ENCODE measurements at regions of chr2 and their contacts with region 1.

Region 1: GRCh38 chr2:74147727-74148456 is at the start of gene BOLA3:
- DNase-seq: peak; percentile 92
- H3K4me3 Mint-ChIP-seq: no peak within 1 kb of the TSS
- H3K27ac Mint-ChIP-seq: no peak within 1 kb of the TSS
- H3K4me1 Mint-ChIP-seq: peaks cover 4% of the 10 kb centered on the region
- H3K27me3 Mint-ChIP-seq: no peaks in the 10 kb centered on the region
- total RNA-seq, gene BOLA3: 97.2 to 99.8 TPM

Region 2: GRCh38 chr2:73759285-73759764 is 388.6 kb before region 1 on chr2:
- CTCF ChIA-PET with region 1: no interaction called
- POLR2A ChIA-PET with region 1: no interaction called
- intact Hi-C with region 1: loop called (anchors 10 kb)
- DNase-seq: no peak
- H3K4me3 Mint-ChIP-seq: no peak overlapping the region
- H3K27ac Mint-ChIP-seq: no peak overlapping the region
- H3K4me1 Mint-ChIP-seq: no peaks in the 10 kb centered on the region
- H3K27me3 Mint-ChIP-seq: no peaks in the 10 kb centered on the region

Region 3: DNA sequence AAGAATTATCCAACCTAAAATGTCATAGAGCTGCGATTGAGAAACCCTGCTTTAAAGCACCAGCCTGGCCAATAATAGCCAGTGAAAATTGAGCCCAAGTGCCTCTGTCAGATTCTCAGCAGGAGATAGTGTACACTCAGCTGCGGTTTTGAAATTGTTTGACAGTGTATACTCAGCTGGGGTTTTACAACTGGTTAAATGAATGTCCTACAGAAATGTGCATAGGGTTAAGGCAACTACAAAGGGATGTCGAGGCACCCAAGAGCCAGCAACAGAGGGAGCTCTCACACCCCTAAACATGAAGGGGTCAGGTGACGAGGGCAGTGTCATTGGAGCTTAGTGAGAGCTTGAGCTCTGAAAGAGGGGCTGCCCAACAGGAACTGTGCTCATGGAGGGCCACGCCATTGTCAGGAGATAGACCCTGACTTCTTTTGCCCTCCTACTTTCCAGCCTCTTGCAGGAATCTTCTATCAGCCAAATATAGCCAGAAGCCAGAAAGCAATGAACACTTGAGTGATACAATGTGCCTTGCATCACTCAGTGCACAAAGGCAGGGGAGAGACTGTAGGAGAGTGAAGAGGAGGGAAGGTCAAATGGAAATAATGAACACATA is 239.9 kb before region 1 on chr2:
- CTCF ChIA-PET with region 1: interaction called, 10 read pairs
- POLR2A ChIA-PET with region 1: no interaction called
- intact Hi-C with region 1: loop called (anchors 1 kb)
- DNase-seq: peak; percentile 75
- H3K4me3 Mint-ChIP-seq: no peak overlapping the region
- H3K27ac Mint-ChIP-seq: no peak overlapping the region
- H3K4me1 Mint-ChIP-seq: peaks cover 7% of the 10 kb centered on the region
- H3K27me3 Mint-ChIP-seq: no peaks in the 10 kb centered on the region

Region 4: GRCh38 chr2:74002487-74003391 is 145.2 kb before region 1 on chr2:
- CTCF ChIA-PET with region 1: interaction called, 3 read pairs
- POLR2A ChIA-PET with region 1: no interaction called
- intact Hi-C with region 1: loop called (anchors 2 kb)
- DNase-seq: peak; percentile 84
- H3K4me3 Mint-ChIP-seq: peak overlapping the region; percentile 76
- H3K27ac Mint-ChIP-seq: peak overlapping the region; percentile 36
- H3K4me1 Mint-ChIP-seq: peaks cover 83% of the 10 kb centered on the region
- H3K27me3 Mint-ChIP-seq: no peaks in the 10 kb centered on the region

Region 5: DNA sequence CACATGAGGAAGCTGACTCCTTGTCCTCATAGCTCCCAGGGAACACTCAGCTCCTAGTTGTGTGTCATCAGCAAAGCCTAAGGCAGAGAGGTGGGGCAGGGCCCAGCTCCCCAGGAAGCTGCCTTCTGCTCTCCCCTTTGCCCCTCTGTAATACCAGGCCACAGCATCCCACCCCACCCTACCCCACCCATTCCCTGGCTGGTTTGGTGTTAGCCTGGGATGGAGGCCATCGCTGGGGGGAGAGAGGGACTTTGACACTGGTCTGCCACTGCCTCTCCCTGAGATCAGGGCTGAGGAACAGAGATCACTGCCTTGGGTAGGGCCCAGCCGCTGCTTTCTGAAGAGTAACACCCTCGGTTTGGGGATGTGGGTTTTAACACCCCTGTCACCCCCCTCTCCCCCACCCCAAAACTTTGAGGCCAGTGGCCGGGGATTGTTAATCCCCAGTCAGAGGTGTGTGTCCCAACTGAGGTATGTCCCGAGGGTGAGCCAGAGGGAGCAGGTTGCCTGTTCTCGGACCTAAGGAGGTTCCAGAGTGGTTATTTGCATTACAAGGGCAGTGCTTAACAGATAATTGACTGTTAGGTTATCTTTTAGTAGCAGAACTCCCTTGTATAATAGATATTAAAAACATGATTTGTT is 121.8 kb before region 1 on chr2:
- CTCF ChIA-PET with region 1: no interaction called
- POLR2A ChIA-PET with region 1: no interaction called
- intact Hi-C with region 1: no loop called
- DNase-seq: no peak
- H3K4me3 Mint-ChIP-seq: no peak overlapping the region
- H3K27ac Mint-ChIP-seq: no peak overlapping the region
- H3K4me1 Mint-ChIP-seq: peaks cover 52% of the 10 kb centered on the region
- H3K27me3 Mint-ChIP-seq: no peaks in the 10 kb centered on the region

Region 6: GRCh38 chr2:74119912-74120825 is 27.7 kb before region 1 on chr2:
- CTCF ChIA-PET with region 1: interaction called, 22 read pairs
- POLR2A ChIA-PET with region 1: interaction called, 7 read pairs
- intact Hi-C with region 1: loop called (anchors 1 kb)
- DNase-seq: peak; percentile 91
- H3K4me3 Mint-ChIP-seq: peak overlapping the region; percentile 84
- H3K27ac Mint-ChIP-seq: peak overlapping the region; percentile 88
- H3K4me1 Mint-ChIP-seq: peaks cover 8% of the 10 kb centered on the region
- H3K27me3 Mint-ChIP-seq: no peaks in the 10 kb centered on the region

Region 7: GRCh38 chr2:74178201-74179062 is 30.5 kb after region 1 on chr2 and contains the start of gene MOB1A:
- CTCF ChIA-PET with region 1: interaction called, 26 read pairs
- POLR2A ChIA-PET with region 1: interaction called, 9 read pairs
- intact Hi-C with region 1: loop called (anchors 2 kb)
- DNase-seq: peak; percentile 99
- H3K4me3 Mint-ChIP-seq: peak within 1 kb of the TSS; percentile 83
- H3K27ac Mint-ChIP-seq: peak within 1 kb of the TSS; percentile 76
- H3K4me1 Mint-ChIP-seq: peaks cover 45% of the 10 kb centered on the region
- H3K27me3 Mint-ChIP-seq: no peaks in the 10 kb centered on the region
- total RNA-seq, gene MOB1A: 159 to 170 TPM

Region 8: DNA sequence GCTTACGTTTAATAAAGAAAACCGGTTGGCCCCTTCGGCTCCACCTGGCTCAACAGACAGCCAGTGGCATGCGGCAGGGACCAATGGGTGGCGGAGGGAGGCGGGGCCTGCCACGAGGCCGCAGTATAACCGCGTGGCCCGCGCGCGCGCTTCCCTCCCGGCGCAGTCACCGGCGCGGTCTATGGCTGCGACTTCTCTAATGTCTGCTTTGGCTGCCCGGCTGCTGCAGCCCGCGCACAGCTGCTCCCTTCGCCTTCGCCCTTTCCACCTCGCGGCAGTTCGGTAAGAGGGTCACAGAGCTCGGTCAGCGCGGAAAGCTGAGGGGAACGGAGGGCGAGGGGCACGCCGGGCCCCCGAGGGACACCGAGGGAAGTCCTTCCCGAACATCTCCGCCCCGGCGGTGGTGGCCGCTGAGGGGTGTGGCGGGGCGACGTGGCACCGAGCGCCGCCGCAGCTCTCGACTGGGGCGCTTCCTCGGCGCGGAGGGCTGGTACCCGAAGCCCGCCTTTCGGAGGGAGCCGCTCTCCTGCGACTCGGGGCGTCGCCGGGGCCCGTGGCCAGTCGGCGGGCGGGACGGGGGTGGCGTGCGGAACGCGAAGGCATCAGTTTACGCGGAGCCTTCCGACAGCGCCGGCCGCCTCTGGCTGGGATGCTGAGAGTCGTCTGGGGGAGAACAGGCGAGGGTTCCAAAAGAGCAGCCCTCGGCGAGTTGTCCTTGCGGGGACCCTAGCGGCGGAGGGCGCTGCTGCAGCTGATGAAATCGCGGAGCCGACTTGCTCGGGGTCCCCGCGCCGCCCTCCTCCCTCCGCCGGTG is 50.8 kb after region 1 on chr2 and contains the start of gene MTHFD2:
- CTCF ChIA-PET with region 1: interaction called, 18 read pairs
- POLR2A ChIA-PET with region 1: interaction called, 22 read pairs
- intact Hi-C with region 1: loop called (anchors 2 kb)
- DNase-seq: peak; percentile 95
- H3K4me3 Mint-ChIP-seq: peak within 1 kb of the TSS; percentile 99
- H3K27ac Mint-ChIP-seq: peak within 1 kb of the TSS; percentile 100
- H3K4me1 Mint-ChIP-seq: peaks cover 39% of the 10 kb centered on the region
- H3K27me3 Mint-ChIP-seq: peaks cover 2% of the 10 kb centered on the region
- total RNA-seq, gene MTHFD2: 518 to 525 TPM